Breast epithelium (tissue), 4 donors: ENCODE measurements at regions of chr2 and their contacts with region 1.

Region 1: DNA sequence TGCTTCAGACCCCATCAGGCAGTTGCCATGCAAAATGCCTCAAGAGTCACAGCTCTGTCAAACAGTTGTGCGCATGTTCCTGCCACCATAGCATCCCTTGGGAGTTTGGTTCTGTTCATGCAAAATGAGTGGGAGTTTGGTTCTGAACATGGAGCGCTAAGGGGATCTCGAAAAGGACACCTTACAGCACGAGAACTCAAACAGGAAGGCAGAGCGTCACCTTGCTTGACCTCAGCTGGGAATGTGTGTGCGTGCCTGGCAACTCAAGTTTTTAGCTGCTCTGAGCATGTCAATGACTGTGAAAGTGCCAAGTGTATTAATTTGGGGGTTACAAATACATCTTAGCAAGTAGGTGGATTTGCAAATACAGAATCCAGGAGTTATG is 16.6 kb downstream of the MALL start:
- DNase-seq: no peak
- H3K4me3 ChIP-seq: no peak overlapping the region
- H3K27ac ChIP-seq: peak overlapping the region; percentile 91 to 95
- H3K4me1 ChIP-seq: peaks cover 0 to 13% of the 10 kb centered on the region in 2 donors
- H3K27me3 ChIP-seq: no peaks in the 10 kb centered on the region
- CTCF ChIP-seq: no peak
- POLR2A ChIP-seq: no peak

Region 2: DNA sequence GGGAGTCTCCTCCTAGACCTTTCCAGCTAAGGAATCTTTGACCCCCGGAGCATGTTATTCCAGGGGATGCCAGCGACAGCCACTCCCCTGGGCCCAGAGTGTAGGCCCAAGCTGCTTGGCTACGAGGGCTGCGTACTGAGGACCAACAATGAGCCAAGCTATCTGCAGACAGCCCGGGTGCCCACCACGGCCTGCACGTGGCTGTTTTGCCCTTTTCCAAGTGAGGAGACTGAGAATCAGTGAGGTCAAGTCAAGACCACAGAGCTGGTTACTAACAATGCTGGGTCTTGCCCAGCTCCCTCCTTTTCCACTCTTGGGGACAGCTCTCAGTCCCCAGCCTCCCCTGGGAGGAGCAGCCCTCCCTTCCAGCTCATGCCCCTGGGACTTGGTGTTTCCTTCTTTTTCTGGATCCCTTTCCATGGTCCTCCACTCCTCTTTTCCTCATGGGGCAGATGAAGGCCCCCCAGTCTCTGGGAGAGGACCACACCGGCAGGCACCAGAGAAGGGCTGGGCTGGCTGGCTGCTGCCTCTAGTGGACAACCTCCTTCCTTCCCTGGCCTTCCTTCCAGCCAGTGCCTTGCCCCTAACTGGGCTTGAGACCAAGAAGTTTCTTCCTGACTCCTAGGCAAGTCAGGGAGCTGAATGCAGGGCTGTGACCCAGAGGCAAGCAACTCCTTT is 17.1 kb after region 1 on chr2:
- intact Hi-C with region 1: loop called (anchors 1 kb)
- DNase-seq: no peak
- H3K4me3 ChIP-seq: peak overlapping the region; percentile 42 to 69 (median 58)
- H3K27ac ChIP-seq: peak overlapping the region; percentile 74 to 82
- H3K4me1 ChIP-seq: peaks cover 0 to 4% of the 10 kb centered on the region in 2 donors
- H3K27me3 ChIP-seq: peaks cover 0 to 32% of the 10 kb centered on the region in 2 donors
- CTCF ChIP-seq: peak; percentile 11 to 45 (median 42)
- POLR2A ChIP-seq: no peak

Region 3: DNA sequence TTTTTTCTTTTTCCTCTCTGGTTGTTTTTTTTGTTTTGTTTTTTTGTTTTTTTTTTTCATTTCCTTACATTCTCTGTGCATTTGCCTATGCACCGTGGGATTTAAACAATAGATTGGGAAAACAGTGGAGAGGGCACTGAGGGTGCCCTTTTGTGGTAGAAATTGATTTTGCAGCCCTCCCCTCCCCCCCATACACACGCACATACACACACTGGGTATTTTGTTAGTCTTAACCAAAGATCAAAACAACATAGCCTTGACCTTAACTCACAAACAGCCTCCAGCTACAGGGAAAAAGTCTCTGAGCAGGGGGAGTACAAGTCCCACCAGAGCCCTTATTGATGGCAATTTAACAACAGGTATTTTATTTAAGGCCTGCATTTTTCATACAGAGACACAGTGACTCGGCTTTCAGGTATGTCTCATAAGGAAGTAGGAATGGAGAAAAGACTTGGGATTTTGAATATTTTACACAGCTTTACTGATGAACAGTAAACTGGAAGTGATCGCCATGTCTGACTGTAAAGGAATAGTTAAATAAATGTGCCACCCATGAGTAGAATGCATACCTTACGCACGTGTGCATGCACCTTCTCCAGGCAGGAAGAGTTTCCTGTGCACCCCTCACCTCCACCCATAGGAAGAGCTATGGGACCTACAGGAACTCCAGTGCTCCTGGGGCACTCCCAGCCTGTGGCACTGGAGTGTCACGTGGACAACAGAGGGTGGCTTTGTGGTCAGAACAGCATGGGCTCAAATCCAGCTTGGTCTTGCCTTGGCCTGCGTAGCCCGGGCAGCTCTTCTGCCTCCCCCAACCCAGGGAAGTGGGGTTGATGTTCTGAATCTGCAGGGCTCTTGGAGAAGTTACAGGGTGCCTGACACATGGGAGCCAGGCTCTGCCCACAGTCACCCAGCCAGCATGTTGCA is 1518.5 kb after region 1 on chr2:
- intact Hi-C with region 1: no loop called
- DNase-seq: peak in 1 of 2 donors; percentile 18
- H3K4me3 ChIP-seq: no peak overlapping the region
- H3K27ac ChIP-seq: peak overlapping the region in 1 of 2 donors; percentile 32
- H3K4me1 ChIP-seq: peaks cover 0 to 6% of the 10 kb centered on the region in 2 donors
- H3K27me3 ChIP-seq: no peaks in the 10 kb centered on the region
- CTCF ChIP-seq: no peak
- POLR2A ChIP-seq: no peak